ENCODE measurements at regions of chr5 and their contacts with region 1.

Region 1: GRCh38 chr5:100872408-100873190 is 30.5 kb downstream of the ST8SIA4 start:
- DNase-seq: no peak
- ATAC-seq: peak; percentile 72
- H3K4me3 ChIP-seq: no peak overlapping the region
- H3K27ac ChIP-seq: no peak overlapping the region; the same call in 1 of the 2 replicates
- H3K4me1 ChIP-seq: no peaks in the 10 kb centered on the region
- H3K27me3 ChIP-seq: no peaks in the 10 kb centered on the region
- CTCF ChIP-seq: no peak
- EP300 ChIP-seq: no peak
- POLR2A ChIP-seq: no peak
- RAD21 ChIP-seq: no peak

Region 2: DNA sequence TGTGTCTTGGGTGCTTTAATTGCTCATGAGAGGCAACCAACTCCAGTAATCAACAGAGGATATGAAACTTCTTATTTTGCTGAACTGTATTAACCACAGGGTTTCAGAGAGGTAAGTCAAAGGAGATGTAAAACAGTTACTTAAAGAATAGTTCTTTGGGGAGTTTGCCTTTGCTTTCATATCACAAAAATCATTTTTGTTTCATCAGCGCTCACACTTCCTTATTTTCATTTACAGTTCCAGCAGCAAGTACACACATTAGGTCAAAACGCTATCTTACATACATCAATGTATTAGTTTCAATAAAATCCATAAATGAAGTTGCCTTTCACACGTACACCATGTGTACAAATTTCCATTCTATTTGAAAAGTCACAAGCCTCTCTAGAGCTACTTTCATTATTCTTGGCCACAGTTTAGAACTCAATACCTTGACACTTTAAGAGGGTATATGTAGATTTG is 19.6 kb before region 1 on chr5:
- CTCF ChIA-PET with region 1: no interaction called
- POLR2A ChIA-PET with region 1: interaction called, 11 read pairs
- RAD21 ChIA-PET with region 1: interaction called, 3 read pairs
- SMC1A ChIA-PET with region 1: interaction called, 19 read pairs
- in situ Hi-C with region 1: no loop called
- intact Hi-C with region 1: no loop called
- DNase-seq: peak; percentile 89
- ATAC-seq: peak; percentile 89
- H3K4me3 ChIP-seq: peak overlapping the region; percentile 21; the same call in 1 of the 2 replicates
- H3K27ac ChIP-seq: peak overlapping the region; percentile 94
- H3K4me1 ChIP-seq: peaks cover 38% of the 10 kb centered on the region
- H3K27me3 ChIP-seq: no peaks in the 10 kb centered on the region
- CTCF ChIP-seq: no peak
- EP300 ChIP-seq: peak; percentile 95 to 96
- POLR2A ChIP-seq: no peak
- RAD21 ChIP-seq: peak; percentile 20; the same call in 1 of the 2 replicates

Region 3: GRCh38 chr5:100860407-100860806 is 12.2 kb before region 1 on chr5:
- CTCF ChIA-PET with region 1: no interaction called
- POLR2A ChIA-PET with region 1: interaction called, 11 read pairs
- RAD21 ChIA-PET with region 1: interaction called, 13 read pairs
- SMC1A ChIA-PET with region 1: interaction called, 19 read pairs
- in situ Hi-C with region 1: no loop called
- intact Hi-C with region 1: no loop called
- DNase-seq: no peak
- ATAC-seq: peak; percentile 63
- H3K4me3 ChIP-seq: no peak overlapping the region
- H3K27ac ChIP-seq: peak overlapping the region; percentile 20
- H3K4me1 ChIP-seq: peaks cover 28% of the 10 kb centered on the region
- H3K27me3 ChIP-seq: no peaks in the 10 kb centered on the region
- CTCF ChIP-seq: no peak
- EP300 ChIP-seq: 0 out of 4 replicates have a peak, but pooled peaks of 1 of the 2 experiments have one; percentile 23
- POLR2A ChIP-seq: no peak
- RAD21 ChIP-seq: no peak

Region 4: GRCh38 chr5:100890461-100891008 is 17.9 kb after region 1 on chr5:
- CTCF ChIA-PET with region 1: interaction called, 5 read pairs
- POLR2A ChIA-PET with region 1: interaction called, 5 read pairs
- RAD21 ChIA-PET with region 1: interaction called, 9 read pairs
- SMC1A ChIA-PET with region 1: interaction called, 17 read pairs
- in situ Hi-C with region 1: no loop called
- intact Hi-C with region 1: no loop called
- DNase-seq: peak; percentile 64
- ATAC-seq: peak; percentile 73
- H3K4me3 ChIP-seq: peak overlapping the region; percentile 58
- H3K27ac ChIP-seq: peak overlapping the region; percentile 87
- H3K4me1 ChIP-seq: peaks cover 15% of the 10 kb centered on the region; the same call in 1 of the 2 replicates
- H3K27me3 ChIP-seq: no peaks in the 10 kb centered on the region
- CTCF ChIP-seq: no peak
- EP300 ChIP-seq: peak; percentile 46 to 57; a peak in 2 of 4 replicates
- POLR2A ChIP-seq: no peak
- RAD21 ChIP-seq: 0 out of 2 replicates have a peak, but pooled peaks have one; percentile 2